ENCODE measurements at regions of chr5 and their contacts with region 1.

Region 1: GRCh38 chr5:142888469-142889085 is 118.4 kb downstream of the ARHGAP26 start:
- ATAC-seq: peak; percentile 56 to 87 (median 75)
- H3K4me3 ChIP-seq: no peak overlapping the region
- H3K27ac ChIP-seq: no peak overlapping the region
- H3K4me1 ChIP-seq: no peaks in the 10 kb centered on the region

Region 2: DNA sequence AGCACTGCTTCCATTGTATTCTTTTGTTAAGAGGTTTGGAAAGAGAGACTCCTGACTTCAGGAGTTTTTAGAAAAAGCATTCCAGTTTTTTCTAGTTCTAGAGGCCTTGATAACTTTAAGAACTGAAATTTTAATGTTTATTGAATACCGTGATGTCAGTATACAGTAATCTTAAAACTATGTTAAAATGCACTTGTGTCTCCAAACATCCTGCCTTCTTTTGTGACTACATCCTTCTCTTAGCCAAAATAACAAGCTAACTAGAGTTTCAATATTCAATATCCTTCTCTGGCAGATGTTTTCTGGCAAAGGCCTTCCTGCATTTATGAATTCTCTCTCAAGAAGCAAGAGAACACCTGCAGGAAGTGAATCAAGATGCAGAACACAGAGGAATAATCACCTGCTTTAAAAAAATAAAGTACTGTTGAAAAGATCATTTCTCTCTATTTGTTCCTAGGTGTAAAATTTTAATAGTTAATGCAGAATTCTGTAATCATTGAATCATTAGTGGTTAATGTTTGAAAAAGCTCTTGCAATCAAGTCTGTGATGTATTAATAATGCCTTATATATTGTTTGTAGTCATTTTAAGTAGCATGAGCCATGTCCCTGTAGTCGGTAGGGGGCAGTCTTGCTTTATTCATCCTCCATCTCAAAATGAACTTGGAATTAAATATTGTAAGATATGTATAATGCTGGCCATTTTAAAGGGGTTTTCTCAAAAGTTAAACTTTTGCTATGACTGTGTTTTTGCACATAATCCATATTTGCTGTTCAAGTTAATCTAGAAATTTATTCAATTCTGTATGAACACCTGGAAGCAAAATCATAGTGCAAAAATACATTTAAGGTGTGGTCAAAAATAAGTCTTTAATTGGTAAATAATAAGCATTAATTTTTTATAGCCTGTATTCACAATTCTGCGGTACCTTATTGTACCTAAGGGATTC is 736.9 kb before region 1 on chr5:
- in situ Hi-C with region 1: loop called in 1 of 9 experiments (anchors 25 kb)
- ATAC-seq: peak in 7 of 8 experiments; percentile 33 to 69 (median 56)
- H3K4me3 ChIP-seq: no peak overlapping the region
- H3K27ac ChIP-seq: no peak overlapping the region
- H3K4me1 ChIP-seq: peaks cover 0 to 6% of the 10 kb centered on the region in 2 donors

Region 3: GRCh38 chr5:142713121-142713706 is 175.4 kb before region 1 on chr5:
- in situ Hi-C with region 1: loop called in 6 of 9 experiments (anchors 25 kb)
- ATAC-seq: peak; percentile 93 to 98 (median 96)
- H3K4me3 ChIP-seq: peak overlapping the region; percentile 42 to 77 (median 62)
- H3K27ac ChIP-seq: peak overlapping the region; percentile 35 to 67
- H3K4me1 ChIP-seq: peaks cover 0 to 6% of the 10 kb centered on the region in 2 donors

Region 4: DNA sequence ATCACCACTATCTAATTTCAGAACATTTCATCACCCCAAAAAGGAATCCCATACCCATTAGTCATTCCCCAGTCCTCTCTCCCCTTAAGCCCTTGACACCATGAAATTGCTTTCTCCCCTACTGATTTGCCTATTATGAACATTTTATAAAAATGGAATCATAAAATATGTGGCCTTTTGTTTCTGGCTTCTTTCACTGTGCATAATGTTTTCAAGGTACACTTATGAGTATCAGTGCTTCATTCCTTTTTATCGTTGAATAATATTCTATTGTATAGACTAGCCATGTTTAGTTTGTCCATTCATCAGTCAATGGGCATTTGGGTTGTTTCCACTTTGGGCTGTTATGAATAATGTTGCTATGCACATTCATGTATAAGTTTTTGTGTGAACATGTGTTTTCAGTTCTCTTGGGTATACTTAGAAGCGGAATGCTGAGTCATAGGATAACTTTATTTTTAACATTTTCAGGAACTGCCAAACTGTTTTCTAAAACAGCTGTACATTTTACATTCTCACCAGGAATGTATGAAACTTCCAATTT is 162.3 kb before region 1 on chr5:
- in situ Hi-C with region 1: loop called in 8 of 9 experiments (anchors 10 to 25 kb)
- ATAC-seq: peak in 6 of 8 experiments; percentile 52 to 96 (median 79)
- H3K4me3 ChIP-seq: no peak overlapping the region
- H3K27ac ChIP-seq: no peak overlapping the region
- H3K4me1 ChIP-seq: peaks cover 0 to 4% of the 10 kb centered on the region in 2 donors

Measured in motor neuron (in vitro differentiated cells).